ENCODE measurements at regions of chr16 and their contacts with region 1.

Region 1: DNA sequence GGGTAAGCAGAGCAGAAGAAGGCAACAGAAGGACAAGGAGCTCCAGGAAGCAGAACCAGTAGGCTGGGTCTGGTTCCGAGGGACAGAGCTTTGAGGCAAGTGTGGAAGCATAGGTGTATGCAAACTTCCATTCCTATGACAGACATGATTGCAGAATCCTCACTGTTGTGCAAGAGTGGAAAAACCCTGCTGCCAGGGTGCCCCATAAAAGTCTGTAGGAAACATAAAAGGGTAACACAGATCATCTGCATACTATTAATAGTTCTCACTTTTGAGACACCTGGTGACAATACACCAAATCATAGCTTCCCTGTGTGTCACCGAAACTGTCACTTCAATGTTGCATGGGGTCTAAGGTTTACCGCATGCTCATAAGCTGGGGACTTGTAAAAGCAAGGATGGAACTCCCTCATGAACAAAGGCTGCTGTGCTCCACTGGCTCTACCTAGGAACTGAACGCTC is 39.7 kb downstream of the ARHGAP17 start:
- DNase-seq: peak; percentile 76
- ATAC-seq: peak; percentile 77
- H3K4me3 ChIP-seq: peak overlapping the region; percentile 22; the same call in 1 of the 2 replicates
- H3K27ac ChIP-seq: peak overlapping the region; percentile 74
- H3K4me1 ChIP-seq: peaks cover 77% of the 10 kb centered on the region
- H3K27me3 ChIP-seq: no peaks in the 10 kb centered on the region
- CTCF ChIP-seq: no peak
- EP300 ChIP-seq: peak; percentile 71; a peak in 2 of 4 replicates
- POLR2A ChIP-seq: no peak
- RAD21 ChIP-seq: no peak

Region 2: GRCh38 chr16:24988593-24989338 is 13.3 kb after region 1 on chr16:
- CTCF ChIA-PET with region 1: interaction called, 8 read pairs
- POLR2A ChIA-PET with region 1: interaction called, 5 read pairs
- RAD21 ChIA-PET with region 1: interaction called, 10 read pairs
- SMC1A ChIA-PET with region 1: interaction called, 51 read pairs
- in situ Hi-C with region 1: no loop called
- intact Hi-C with region 1: no loop called
- DNase-seq: no peak
- ATAC-seq: peak; percentile 32
- H3K4me3 ChIP-seq: no peak overlapping the region
- H3K27ac ChIP-seq: no peak overlapping the region
- H3K4me1 ChIP-seq: peaks cover 51% of the 10 kb centered on the region
- H3K27me3 ChIP-seq: no peaks in the 10 kb centered on the region
- CTCF ChIP-seq: no peak
- EP300 ChIP-seq: no peak
- POLR2A ChIP-seq: no peak
- RAD21 ChIP-seq: no peak

Region 3: DNA sequence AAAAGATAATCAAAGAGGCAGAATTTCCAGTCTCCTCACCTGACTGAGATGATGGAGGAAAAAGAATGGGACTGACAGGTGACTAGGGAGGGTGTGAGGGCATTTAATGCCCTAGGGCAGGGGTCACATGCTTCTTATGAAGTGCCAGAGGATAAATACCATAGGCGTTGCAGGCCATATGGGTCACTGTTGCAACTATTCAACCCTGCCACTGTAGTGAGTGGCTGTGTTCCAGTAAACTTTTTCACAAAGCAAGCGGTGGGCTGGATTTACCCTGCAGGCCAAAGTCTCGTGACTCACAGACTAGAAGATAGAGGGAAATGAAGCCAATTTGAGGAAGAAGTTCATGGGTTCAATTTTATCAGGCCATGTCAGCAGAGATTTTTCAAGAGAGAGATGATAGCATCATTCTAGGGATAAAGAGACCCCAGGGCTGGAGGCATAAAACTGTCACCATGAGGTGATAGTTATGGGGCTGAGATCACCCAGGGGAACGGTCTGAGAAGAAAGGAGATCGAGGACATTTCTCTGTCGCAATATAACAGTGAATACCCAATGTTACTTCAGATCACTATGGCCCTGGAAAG is 31.1 kb after region 1 on chr16:
- CTCF ChIA-PET with region 1: interaction called, 4 read pairs
- POLR2A ChIA-PET with region 1: interaction called, 7 read pairs
- RAD21 ChIA-PET with region 1: interaction called, 5 read pairs
- SMC1A ChIA-PET with region 1: interaction called, 17 read pairs
- in situ Hi-C with region 1: no loop called
- intact Hi-C with region 1: no loop called
- DNase-seq: no peak
- ATAC-seq: peak; percentile 44
- H3K4me3 ChIP-seq: peak overlapping the region; percentile 24; the same call in 1 of the 2 replicates
- H3K27ac ChIP-seq: no peak overlapping the region
- H3K4me1 ChIP-seq: peaks cover 49% of the 10 kb centered on the region
- H3K27me3 ChIP-seq: no peaks in the 10 kb centered on the region
- CTCF ChIP-seq: no peak
- EP300 ChIP-seq: no peak
- POLR2A ChIP-seq: no peak
- RAD21 ChIP-seq: no peak

Region 4: DNA sequence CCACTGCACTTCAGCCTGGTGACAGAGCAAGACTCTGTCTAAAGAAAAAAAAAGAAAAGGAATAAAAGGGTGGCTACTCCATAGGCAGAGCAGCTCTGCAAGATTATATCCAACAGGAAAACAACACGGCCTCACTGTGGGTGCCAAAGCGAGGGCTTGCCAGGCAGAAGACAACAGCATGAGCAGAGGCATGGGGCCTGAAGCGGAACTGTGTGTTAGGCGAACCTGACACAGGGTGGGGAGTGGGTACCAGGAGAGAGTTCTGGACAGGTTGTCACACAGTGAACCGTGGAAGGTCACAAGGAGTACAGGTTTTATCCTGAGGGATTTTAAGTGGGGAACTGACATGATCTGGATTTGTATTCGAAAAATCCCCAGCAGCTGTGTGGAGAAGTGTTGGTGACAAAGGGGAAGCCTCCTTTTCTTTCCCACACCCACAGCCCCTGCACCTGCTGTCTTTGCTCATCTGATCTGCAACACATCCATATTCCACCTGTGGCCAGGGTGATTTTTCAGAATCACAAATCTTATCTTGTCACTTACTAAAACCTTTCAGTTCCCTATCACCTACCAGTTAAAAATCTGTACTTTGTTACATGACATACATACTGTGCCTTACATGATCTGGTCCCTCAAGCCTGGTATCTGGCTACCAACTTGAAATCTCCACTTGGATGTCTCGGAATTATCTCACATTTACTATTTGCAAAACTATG is 62.9 kb after region 1 on chr16:
- CTCF ChIA-PET with region 1: no interaction called
- POLR2A ChIA-PET with region 1: interaction called, 9 read pairs
- RAD21 ChIA-PET with region 1: interaction called, 22 read pairs
- SMC1A ChIA-PET with region 1: interaction called, 8 read pairs
- in situ Hi-C with region 1: no loop called
- intact Hi-C with region 1: loop called (anchors 5 kb)
- DNase-seq: no peak
- ATAC-seq: peak; percentile 78
- H3K4me3 ChIP-seq: no peak overlapping the region
- H3K27ac ChIP-seq: peak overlapping the region; percentile 64
- H3K4me1 ChIP-seq: peaks cover 50% of the 10 kb centered on the region
- H3K27me3 ChIP-seq: no peaks in the 10 kb centered on the region
- CTCF ChIP-seq: no peak
- EP300 ChIP-seq: peak; percentile 74 to 85; a peak in 3 of 4 replicates
- POLR2A ChIP-seq: no peak
- RAD21 ChIP-seq: no peak

Region 5: GRCh38 chr16:25045696-25046381 is 70.4 kb after region 1 on chr16:
- CTCF ChIA-PET with region 1: no interaction called
- POLR2A ChIA-PET with region 1: interaction called, 9 read pairs
- RAD21 ChIA-PET with region 1: interaction called, 27 read pairs
- SMC1A ChIA-PET with region 1: interaction called, 21 read pairs
- in situ Hi-C with region 1: no loop called
- intact Hi-C with region 1: loop called (anchors 5 kb)
- DNase-seq: no peak
- ATAC-seq: no peak
- H3K4me3 ChIP-seq: no peak overlapping the region
- H3K27ac ChIP-seq: peak overlapping the region; percentile 45; the same call in 1 of the 2 replicates
- H3K4me1 ChIP-seq: peaks cover 70% of the 10 kb centered on the region
- H3K27me3 ChIP-seq: no peaks in the 10 kb centered on the region
- CTCF ChIP-seq: no peak
- EP300 ChIP-seq: peak in 1 of 2 experiments; percentile 35; a peak in 1 of 4 replicates
- POLR2A ChIP-seq: no peak
- RAD21 ChIP-seq: no peak

Region 6: GRCh38 chr16:25051406-25052150 is 76.1 kb after region 1 on chr16:
- CTCF ChIA-PET with region 1: interaction called, 3 read pairs
- POLR2A ChIA-PET with region 1: interaction called, 3 read pairs
- RAD21 ChIA-PET with region 1: interaction called, 27 read pairs
- SMC1A ChIA-PET with region 1: interaction called, 21 read pairs
- in situ Hi-C with region 1: no loop called
- intact Hi-C with region 1: no loop called
- DNase-seq: no peak
- ATAC-seq: peak; percentile 13
- H3K4me3 ChIP-seq: peak overlapping the region; percentile 59; the same call in 1 of the 2 replicates
- H3K27ac ChIP-seq: peak overlapping the region; percentile 2
- H3K4me1 ChIP-seq: peaks cover 33% of the 10 kb centered on the region
- H3K27me3 ChIP-seq: no peaks in the 10 kb centered on the region
- CTCF ChIP-seq: no peak
- EP300 ChIP-seq: no peak; a peak in 1 of 4 replicates
- POLR2A ChIP-seq: no peak
- RAD21 ChIP-seq: 0 out of 2 replicates have a peak, but pooled peaks have one; percentile 1

Region 7: DNA sequence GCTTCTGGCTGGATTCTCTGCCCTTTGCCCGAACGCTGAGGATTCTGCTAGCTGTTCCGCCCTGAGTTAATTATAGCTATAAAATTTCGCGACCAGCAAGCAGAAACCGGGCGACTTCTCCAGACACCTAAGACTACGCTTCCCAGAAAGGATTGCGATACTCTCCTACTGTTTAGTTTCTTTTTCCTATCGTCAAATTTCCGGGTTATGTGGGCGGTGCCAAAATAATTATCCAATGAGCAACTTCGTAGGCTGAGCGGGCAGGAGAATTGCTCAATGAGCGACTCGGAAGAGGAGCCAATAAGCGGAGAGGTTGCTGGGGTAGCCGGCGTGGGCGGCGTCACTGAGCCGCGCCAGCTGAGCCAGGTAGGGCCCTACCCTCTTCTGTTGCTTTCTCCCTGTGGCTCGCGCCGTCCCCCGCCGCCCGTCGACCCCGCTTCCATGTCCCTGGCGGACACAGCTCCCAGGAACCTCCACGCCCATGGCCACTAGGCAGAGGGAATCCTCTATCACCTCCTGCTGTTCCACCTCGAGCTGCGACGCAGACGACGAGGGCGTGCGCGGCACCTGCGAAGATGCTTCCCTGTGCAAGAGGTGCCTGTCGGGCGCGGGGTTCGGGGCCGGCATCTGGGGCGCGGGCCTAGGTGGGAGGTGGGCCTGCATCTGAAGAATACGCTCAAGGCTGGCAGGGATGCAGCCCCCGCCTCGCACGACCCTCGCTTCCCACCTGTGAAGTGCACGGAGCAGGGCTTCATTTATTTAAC is 136.1 kb after region 1 on chr16 and contains the start of gene LCMT1:
- CTCF ChIA-PET with region 1: no interaction called
- POLR2A ChIA-PET with region 1: interaction called, 3 read pairs
- RAD21 ChIA-PET with region 1: no interaction called
- SMC1A ChIA-PET with region 1: interaction called, 3 read pairs
- in situ Hi-C with region 1: no loop called
- intact Hi-C with region 1: loop called (anchors 5 kb)
- DNase-seq: peak; percentile 97
- ATAC-seq: peak; percentile 87
- H3K4me3 ChIP-seq: peak within 1 kb of the TSS; percentile 85
- H3K27ac ChIP-seq: peak within 1 kb of the TSS; percentile 72
- H3K4me1 ChIP-seq: peaks cover 9% of the 10 kb centered on the region; the same call in 1 of the 2 replicates
- H3K27me3 ChIP-seq: no peaks in the 10 kb centered on the region
- CTCF ChIP-seq: no peak
- EP300 ChIP-seq: no peak
- POLR2A ChIP-seq: peak; percentile 82
- RAD21 ChIP-seq: no peak
- polyA plus RNA-seq, gene LCMT1: 34.1 to 37.8 TPM

Measured in GM12878 (cell line).